Head of caudate nucleus (tissue), 42 donors: ENCODE measurements at regions of chr1 and their contacts with region 1.

Region 1: GRCh38 chr1:26111530-26112406 is at the start of gene PDIK1L:
- DNase-seq: peak; percentile 70 to 97 (median 92)

Region 2: DNA sequence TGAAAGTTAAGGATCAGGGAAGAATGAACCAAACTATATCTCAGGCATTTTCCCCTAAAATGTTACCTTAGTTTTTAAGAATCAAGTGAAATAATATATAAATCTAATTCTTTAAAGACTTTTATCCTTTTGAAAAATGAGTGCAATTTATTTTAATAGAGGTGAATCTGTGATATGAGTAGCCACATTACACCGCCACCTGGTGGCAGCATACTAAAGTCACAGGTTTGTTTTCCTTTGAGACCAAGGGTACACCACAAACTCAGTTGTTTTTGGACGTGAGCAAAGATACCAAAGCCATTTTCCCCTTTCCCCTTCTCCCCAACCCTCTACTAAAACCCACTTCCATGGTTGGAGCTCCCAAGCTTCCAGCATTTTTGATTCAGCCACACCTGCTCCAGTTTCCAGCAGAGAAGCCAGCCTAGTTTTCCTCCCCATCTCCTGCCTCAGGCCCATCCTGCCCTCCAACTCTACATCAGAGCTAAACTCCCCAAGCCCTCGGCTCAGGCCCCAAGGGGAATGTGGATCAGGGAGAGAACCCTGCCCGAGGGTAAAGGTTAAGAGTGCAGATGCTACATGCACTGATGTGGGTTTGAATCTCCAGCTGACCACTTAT is 591.2 kb before region 1 on chr1:
- intact Hi-C with region 1: no loop called
- DNase-seq: peak; percentile 59 to 93 (median 80)

Region 3: DNA sequence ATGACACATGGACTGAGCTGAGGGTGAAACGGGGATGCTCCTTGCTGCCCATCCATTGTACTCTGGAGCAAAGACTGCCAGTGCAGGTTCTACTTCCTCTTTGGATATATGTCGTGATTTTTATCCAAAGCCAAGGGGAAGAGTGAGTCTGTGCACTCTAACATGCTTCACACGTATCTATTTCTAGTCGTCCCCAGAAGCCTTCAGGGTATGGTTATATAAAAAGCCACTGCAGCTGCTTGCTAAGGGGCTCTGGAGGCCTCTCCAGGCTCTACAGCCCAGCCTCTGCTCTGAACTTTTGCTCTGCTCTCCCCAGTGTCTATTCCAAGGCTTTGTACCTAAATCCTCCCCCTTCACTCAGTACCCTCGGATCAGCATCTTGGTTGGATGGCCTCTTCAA is 134.0 kb before region 1 on chr1:
- intact Hi-C with region 1: no loop called
- DNase-seq: no peak

Region 4: DNA sequence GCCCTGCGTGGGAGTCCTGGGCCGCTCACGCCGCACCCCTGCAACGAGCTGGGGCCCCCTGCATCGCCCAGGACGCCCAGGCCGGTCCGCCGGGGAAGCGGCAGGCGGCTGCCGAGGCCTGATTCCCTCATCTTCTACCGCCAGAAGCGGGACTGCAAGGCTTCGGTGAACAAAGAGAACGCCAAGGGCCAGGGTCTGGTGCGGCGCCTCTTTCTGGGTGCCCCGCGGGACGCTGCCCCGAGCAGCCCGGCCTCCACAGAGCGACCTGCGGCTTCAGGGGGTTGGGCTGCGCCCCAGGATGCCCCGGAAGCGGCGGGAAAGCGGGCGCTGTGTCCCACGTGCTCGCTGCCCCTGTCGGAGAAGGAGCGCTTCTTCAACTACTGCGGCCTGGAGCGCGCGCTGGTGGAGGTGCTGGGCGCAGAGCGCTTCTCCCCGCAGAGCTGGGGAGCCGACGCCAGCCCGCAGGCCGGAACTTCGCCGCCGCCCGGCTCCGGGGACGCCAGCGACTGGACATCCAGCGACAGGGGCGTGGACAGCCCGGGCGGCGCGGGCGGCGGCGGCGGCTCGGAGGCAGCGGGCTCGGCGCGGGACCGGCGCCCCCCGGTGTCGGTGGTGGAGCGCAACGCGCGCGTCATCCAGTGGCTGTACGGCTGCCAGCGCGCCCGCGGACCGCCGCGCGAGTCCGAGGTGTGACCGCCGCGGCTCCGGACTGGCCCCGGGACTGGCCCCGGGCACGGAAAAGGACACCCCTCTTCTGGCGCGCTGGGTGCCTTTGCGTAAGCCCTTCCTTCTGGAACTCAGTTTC is 49.8 kb after region 1 on chr1:
- intact Hi-C with region 1: loop called (anchors 5 kb)
- DNase-seq: peak in 40 of 42 donors; percentile 34 to 85 (median 67)